AG04449 (cell line): ENCODE measurements at regions of chr12 and their contacts with region 1.

Region 1: GRCh38 chr12:62793256-62794217 is 141.4 kb downstream of the PPM1H start:
- DNase-seq: peak; percentile 79
- H3K4me3 ChIP-seq: no peak overlapping the region
- CTCF ChIP-seq: peak; percentile 56

Region 2: GRCh38 chr12:62575036-62575435 is 218.5 kb before region 1 on chr12:
- CTCF ChIA-PET with region 1: interaction called, 347 read pairs
- POLR2A ChIA-PET with region 1: no interaction called
- DNase-seq: no peak
- H3K4me3 ChIP-seq: no peak overlapping the region
- CTCF ChIP-seq: no peak

Region 3: GRCh38 chr12:62588916-62589315 is 204.6 kb before region 1 on chr12:
- CTCF ChIA-PET with region 1: interaction called, 347 read pairs
- POLR2A ChIA-PET with region 1: no interaction called
- DNase-seq: no peak
- H3K4me3 ChIP-seq: no peak overlapping the region
- CTCF ChIP-seq: no peak

Region 4: GRCh38 chr12:62629971-62630739 is 163.4 kb before region 1 on chr12:
- CTCF ChIA-PET with region 1: interaction called, 12 read pairs
- POLR2A ChIA-PET with region 1: no interaction called
- DNase-seq: no peak
- H3K4me3 ChIP-seq: no peak overlapping the region
- CTCF ChIP-seq: no peak

Region 5: DNA sequence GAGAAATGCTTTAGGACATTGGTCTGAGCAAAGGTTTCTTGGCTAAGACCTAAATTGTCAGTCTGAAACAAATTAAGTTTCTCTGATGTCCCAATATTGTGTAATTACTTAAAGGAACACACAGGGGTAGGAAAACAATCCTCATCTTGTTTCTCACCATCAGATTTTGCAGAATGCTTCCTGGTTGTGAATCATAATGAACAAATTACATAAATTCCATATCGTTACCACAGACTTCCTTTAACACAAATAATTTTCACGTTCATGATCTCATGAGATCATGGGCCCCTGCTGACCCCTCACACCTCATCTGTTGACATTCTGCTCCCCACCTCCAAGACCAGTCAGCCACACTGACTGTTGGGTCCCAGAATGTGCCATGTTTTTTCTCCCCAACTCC is 132.8 kb before region 1 on chr12:
- CTCF ChIA-PET with region 1: no interaction called
- POLR2A ChIA-PET with region 1: no interaction called
- DNase-seq: peak; percentile 72
- H3K4me3 ChIP-seq: no peak overlapping the region
- CTCF ChIP-seq: no peak

Region 6: DNA sequence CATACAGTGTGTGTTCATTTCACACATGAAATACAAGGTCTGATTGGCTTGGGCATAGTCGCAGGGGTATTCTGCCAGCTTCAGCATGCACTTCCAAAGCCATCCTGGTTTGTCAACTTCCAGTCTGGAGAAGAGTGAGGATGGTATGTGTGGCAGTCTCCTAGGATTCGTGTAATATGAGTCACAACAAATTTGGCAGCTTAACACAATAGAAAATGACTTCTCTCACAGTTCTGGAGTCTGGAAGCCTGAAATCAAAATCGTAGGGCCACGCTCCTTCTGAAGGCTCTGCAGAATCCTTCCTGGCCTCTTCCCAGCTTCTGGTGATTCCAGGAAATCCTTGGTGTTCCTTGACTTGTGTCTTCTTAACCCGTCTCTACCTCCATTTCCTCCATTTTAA is 26.0 kb before region 1 on chr12:
- CTCF ChIA-PET with region 1: interaction called, 14 read pairs
- POLR2A ChIA-PET with region 1: no interaction called
- DNase-seq: peak; percentile 23
- H3K4me3 ChIP-seq: no peak overlapping the region
- CTCF ChIP-seq: no peak

Region 7: GRCh38 chr12:62873116-62873742 is 79.7 kb after region 1 on chr12:
- CTCF ChIA-PET with region 1: no interaction called
- POLR2A ChIA-PET with region 1: no interaction called
- DNase-seq: no peak
- H3K4me3 ChIP-seq: no peak overlapping the region
- CTCF ChIP-seq: no peak